Activated CD8-positive, alpha-beta T cell treated with anti-CD3 and anti-CD28 coated beads for 36 hours (primary cell): ENCODE measurements at regions of chr17 and their contacts with region 1.

Region 1: GRCh38 chr17:43338886-43339516 is 59.8 kb upstream of the ARL4D start:
- DNase-seq: peak; percentile 83
- ATAC-seq: no peak
- H3K4me3 Mint-ChIP-seq: no peak overlapping the region
- H3K27ac Mint-ChIP-seq: no peak overlapping the region
- H3K4me1 Mint-ChIP-seq: peaks cover 41% of the 10 kb centered on the region
- H3K27me3 Mint-ChIP-seq: no peaks in the 10 kb centered on the region
- CTCF ChIP-seq: peak; percentile 88

Region 2: GRCh38 chr17:43324205-43324893 is 14.7 kb before region 1 on chr17:
- CTCF ChIA-PET with region 1: interaction called, 10 read pairs
- POLR2A ChIA-PET with region 1: interaction called, 3 read pairs
- intact Hi-C with region 1: no loop called
- DNase-seq: no peak
- ATAC-seq: peak; percentile 53
- H3K4me3 Mint-ChIP-seq: no peak overlapping the region
- H3K27ac Mint-ChIP-seq: no peak overlapping the region
- H3K4me1 Mint-ChIP-seq: peaks cover 9% of the 10 kb centered on the region
- H3K27me3 Mint-ChIP-seq: peaks cover 17% of the 10 kb centered on the region
- CTCF ChIP-seq: no peak